Naive thymus-derived CD4-positive, alpha-beta T cell (primary cell): ENCODE measurements at regions of chr2 and their contacts with region 1.

Region 1: GRCh38 chr2:238784671-238785527 is 63.0 kb upstream of the TWIST2 start:
- DNase-seq: peak in 7 of 9 donors; percentile 25 to 53 (median 38)
- ATAC-seq: peak; percentile 46
- H3K4me3 ChIP-seq: no peak overlapping the region
- H3K4me3 Mint-ChIP-seq: no peak overlapping the region
- H3K27ac ChIP-seq: no peak overlapping the region
- H3K27ac Mint-ChIP-seq: no peak overlapping the region
- H3K4me1 ChIP-seq: no peaks in the 10 kb centered on the region
- H3K4me1 Mint-ChIP-seq: peaks cover 0 to 2% (median 0%) of the 10 kb centered on the region in 7 donors
- H3K27me3 ChIP-seq: no peaks in the 10 kb centered on the region
- H3K27me3 Mint-ChIP-seq: peaks cover 6 to 31% (median 14%) of the 10 kb centered on the region in 5 donors

Region 2: GRCh38 chr2:238513346-238513745 is 271.6 kb before region 1 on chr2:
- CTCF ChIA-PET with region 1: no interaction called
- POLR2A ChIA-PET with region 1: no interaction called
- intact Hi-C with region 1: loop called in 1 of 2 experiments (anchors 2 kb)
- DNase-seq: no peak
- ATAC-seq: no peak
- H3K4me3 ChIP-seq: no peak overlapping the region
- H3K4me3 Mint-ChIP-seq: no peak overlapping the region
- H3K27ac ChIP-seq: no peak overlapping the region
- H3K27ac Mint-ChIP-seq: no peak overlapping the region
- H3K4me1 ChIP-seq: no peaks in the 10 kb centered on the region
- H3K4me1 Mint-ChIP-seq: peaks cover 0 to 7% (median 4%) of the 10 kb centered on the region in 7 donors
- H3K27me3 ChIP-seq: no peaks in the 10 kb centered on the region
- H3K27me3 Mint-ChIP-seq: peaks cover 0 to 15% (median 0%) of the 10 kb centered on the region in 5 donors